GM18951 (cell line): ENCODE measurements at regions of chr16 and their contacts with region 1.

Region 1: DNA sequence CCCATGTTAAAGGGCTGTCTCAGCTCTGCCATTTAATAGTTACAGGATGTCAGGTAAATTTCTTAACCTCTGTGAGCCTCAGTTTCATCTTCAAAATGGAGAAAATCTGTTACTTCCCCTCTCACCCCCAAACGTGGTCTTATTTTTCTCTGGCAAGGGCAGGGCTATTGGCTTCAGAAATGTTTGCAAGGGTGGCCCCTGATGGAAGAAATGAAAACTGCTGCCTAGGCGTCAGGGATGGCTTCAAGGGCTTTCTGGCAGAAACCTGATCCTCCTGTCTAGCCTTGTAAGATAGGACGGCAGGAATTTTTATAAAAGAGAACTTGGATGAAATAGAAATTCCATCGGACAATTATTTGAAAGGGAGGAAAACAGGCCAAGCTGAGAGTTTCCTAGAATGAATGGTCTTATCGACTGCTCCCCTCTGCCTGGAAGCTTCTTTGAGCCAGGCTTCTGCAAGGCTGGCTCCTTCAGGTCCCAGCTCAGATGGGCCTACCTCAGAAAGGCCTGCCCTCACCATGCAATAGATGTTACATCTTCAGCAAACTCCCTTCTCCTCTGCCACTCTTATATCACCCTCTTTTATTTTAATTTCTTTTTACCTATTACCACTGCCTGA is 43.0 kb upstream of the TANGO6 start:
- POLR2A ChIP-seq: no peak

Region 2: DNA sequence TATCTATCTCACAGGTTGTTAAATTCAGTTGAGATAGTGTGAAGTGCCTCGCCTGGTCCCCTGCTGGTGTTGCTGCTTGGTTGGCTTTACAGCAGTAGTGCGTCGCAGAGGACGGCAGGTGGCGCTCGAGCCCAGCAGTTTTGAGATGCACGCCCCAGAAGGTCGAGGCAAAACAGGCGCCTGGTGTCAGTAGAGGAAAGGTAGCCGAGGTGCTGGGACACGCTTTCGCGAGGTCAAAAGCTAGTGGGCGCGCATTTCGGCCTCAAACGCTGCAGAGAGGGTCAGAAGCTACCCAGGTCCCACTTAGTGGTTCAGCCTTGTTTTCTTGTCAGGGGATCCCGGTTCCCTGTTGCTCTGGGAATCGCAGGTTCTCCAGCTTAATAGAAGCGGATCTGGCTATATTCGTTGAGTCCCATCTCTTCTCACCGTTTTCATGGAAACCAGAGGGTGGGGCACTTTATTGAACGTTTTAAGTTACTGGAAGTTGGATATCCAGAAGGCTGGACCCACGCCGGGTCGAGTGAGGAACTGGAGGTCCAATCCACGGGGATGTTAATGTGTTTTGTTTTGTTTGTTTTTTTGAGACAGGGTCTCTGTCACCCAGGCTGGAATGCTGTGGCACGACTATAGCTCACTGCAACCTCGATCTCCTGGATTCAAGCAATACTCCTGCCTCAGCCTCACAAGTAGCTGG is 271.5 kb before region 1 on chr16:
- in situ Hi-C with region 1: loop called (anchors 25 kb)
- POLR2A ChIP-seq: no peak

Region 3: GRCh38 chr16:68676113-68676860 is 124.1 kb before region 1 on chr16:
- in situ Hi-C with region 1: no loop called
- POLR2A ChIP-seq: no peak